Right cardiac atrium (tissue), 5 donors: ENCODE measurements at regions of chr1 and their contacts with region 1.

Region 1: GRCh38 chr1:171644805-171645483 is 7.5 kb downstream of the MYOC start:
- DNase-seq: peak; percentile 77 to 89 (median 81)
- ATAC-seq: peak; percentile 82 to 89
- H3K4me3 ChIP-seq: no peak overlapping the region
- H3K27ac ChIP-seq: peak overlapping the region; percentile 16
- H3K4me1 ChIP-seq: peaks cover 4% of the 10 kb centered on the region
- H3K27me3 ChIP-seq: no peaks in the 10 kb centered on the region

Region 2: GRCh38 chr1:171715813-171716251 is 70.9 kb after region 1 on chr1:
- intact Hi-C with region 1: loop called (anchors 2 to 10 kb)
- DNase-seq: no peak
- ATAC-seq: no peak
- H3K4me3 ChIP-seq: no peak overlapping the region
- H3K27ac ChIP-seq: peak overlapping the region; percentile 29
- H3K4me1 ChIP-seq: peaks cover 3% of the 10 kb centered on the region
- H3K27me3 ChIP-seq: no peaks in the 10 kb centered on the region